Activated T-helper 2 cell treated with anti-CD3 and anti-CD28 coated beads, Interferon-gamma antibody, Interleukin-2, Interleukin-4, amounts not matched to agents 10 μg/mL and 5 μg/mL and 100 μg/mL, durations not matched to agents 14 hours and 24 hours and 36 hours (primary cell): ENCODE measurements at regions of chrX and their contacts with region 1.

Region 1: GRCh38 chrX:53071604-53072417 is 10.4 kb upstream of the TSPYL2 start:
- DNase-seq: peak; percentile 54
- H3K4me3 Mint-ChIP-seq: peak overlapping the region; percentile 88
- H3K27ac Mint-ChIP-seq: peak overlapping the region; percentile 48
- H3K4me1 Mint-ChIP-seq: peaks cover 20% of the 10 kb centered on the region
- H3K27me3 Mint-ChIP-seq: no peaks in the 10 kb centered on the region

Region 2: GRCh38 chrX:53093748-53094583 is 22.2 kb after region 1 on chrX and contains the start of gene KANTR:
- intact Hi-C with region 1: loop called (anchors 1 kb)
- DNase-seq: peak; percentile 80
- H3K4me3 Mint-ChIP-seq: peak within 1 kb of the TSS; percentile 88
- H3K27ac Mint-ChIP-seq: peak within 1 kb of the TSS; percentile 88
- H3K4me1 Mint-ChIP-seq: peaks cover 14% of the 10 kb centered on the region
- H3K27me3 Mint-ChIP-seq: no peaks in the 10 kb centered on the region
- total RNA-seq, gene KANTR: 9.7 and 11.2 TPM in 2 replicates

Region 3: GRCh38 chrX:53224860-53225797 is 153.3 kb after region 1 on chrX and contains the start of gene KDM5C:
- intact Hi-C with region 1: loop called (anchors 10 kb)
- DNase-seq: peak; percentile 85
- H3K4me3 Mint-ChIP-seq: peak within 1 kb of the TSS; percentile 93
- H3K27ac Mint-ChIP-seq: peak within 1 kb of the TSS; percentile 98
- H3K4me1 Mint-ChIP-seq: peaks cover 39% of the 10 kb centered on the region
- H3K27me3 Mint-ChIP-seq: no peaks in the 10 kb centered on the region
- total RNA-seq, gene KDM5C: 98.3 and 111 TPM in 2 replicates